CD14-positive monocyte (primary cell): ENCODE measurements at regions of chr18 and their contacts with region 1.

Region 1: GRCh38 chr18:45282101-45282812 is 333.0 kb upstream of the SLC14A2 start:
- DNase-seq: no peak
- H3K4me3 ChIP-seq: no peak overlapping the region
- H3K4me3 Mint-ChIP-seq: no peak overlapping the region
- H3K27ac ChIP-seq: no peak overlapping the region
- H3K27ac Mint-ChIP-seq: peak overlapping the region in 1 of 7 donors; percentile 5
- H3K4me1 ChIP-seq: no peaks in the 10 kb centered on the region
- H3K4me1 Mint-ChIP-seq: peaks cover 6% of the 10 kb centered on the region
- H3K27me3 ChIP-seq: no peaks in the 10 kb centered on the region
- H3K27me3 Mint-ChIP-seq: peaks cover 0 to 5% (median 4%) of the 10 kb centered on the region in 3 donors
- CTCF ChIP-seq: no peak

Region 2: GRCh38 chr18:44290366-44290977 is 991.8 kb before region 1 on chr18:
- intact Hi-C with region 1: loop called in 1 of 2 experiments (anchors 5 kb)
- DNase-seq: no peak
- H3K4me3 ChIP-seq: no peak overlapping the region
- H3K4me3 Mint-ChIP-seq: no peak overlapping the region
- H3K27ac ChIP-seq: no peak overlapping the region
- H3K27ac Mint-ChIP-seq: no peak overlapping the region
- H3K4me1 ChIP-seq: no peaks in the 10 kb centered on the region
- H3K4me1 Mint-ChIP-seq: no peaks in the 10 kb centered on the region
- H3K27me3 ChIP-seq: no peaks in the 10 kb centered on the region
- H3K27me3 Mint-ChIP-seq: peaks cover 0 to 2% (median 0%) of the 10 kb centered on the region in 3 donors
- CTCF ChIP-seq: no peak